ENCODE measurements at regions of chr2 and their contacts with region 1.

Region 1: DNA sequence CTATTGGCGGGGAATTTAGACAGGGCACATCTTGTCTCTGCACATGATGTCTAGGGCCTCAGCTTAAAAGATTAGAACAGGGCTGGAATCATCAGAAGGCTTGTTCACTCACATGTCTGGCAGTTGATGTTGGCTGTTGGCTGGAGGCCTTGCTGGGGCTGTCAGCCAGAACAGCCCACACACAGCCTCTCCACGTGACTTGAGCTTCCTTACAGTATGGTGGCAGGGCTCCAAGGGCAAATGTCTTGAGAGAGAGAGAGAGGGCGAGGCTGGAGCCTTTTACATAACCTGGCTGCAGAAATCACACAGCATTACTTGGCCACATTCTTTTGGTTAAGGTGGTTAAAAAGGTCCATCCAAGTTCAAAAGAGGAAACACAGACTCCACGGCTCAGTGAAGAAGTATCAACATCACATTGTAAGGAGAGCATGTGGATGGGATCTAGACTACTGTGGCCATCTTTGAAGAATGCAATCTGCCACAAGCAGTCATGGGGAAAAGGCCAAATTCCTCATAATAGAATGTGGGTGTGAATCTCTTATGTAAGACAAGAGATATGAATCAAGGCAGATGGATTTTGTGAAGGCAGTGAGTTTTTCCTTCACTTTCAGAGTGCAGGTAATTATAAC is 30.4 kb downstream of the SRSF7 start:
- DNase-seq: no peak
- H3K4me3 Mint-ChIP-seq: peak overlapping the region; percentile 40
- H3K27ac Mint-ChIP-seq: peak overlapping the region; percentile 87
- H3K4me1 Mint-ChIP-seq: peaks cover 59% of the 10 kb centered on the region
- H3K27me3 Mint-ChIP-seq: no peaks in the 10 kb centered on the region

Region 2: GRCh38 chr2:38581193-38582147 is 139.3 kb before region 1 on chr2:
- intact Hi-C with region 1: loop called (anchors 2 kb)
- DNase-seq: peak; percentile 9
- H3K4me3 Mint-ChIP-seq: no peak overlapping the region
- H3K27ac Mint-ChIP-seq: peak overlapping the region; percentile 75
- H3K4me1 Mint-ChIP-seq: peaks cover 28% of the 10 kb centered on the region
- H3K27me3 Mint-ChIP-seq: no peaks in the 10 kb centered on the region

Region 3: GRCh38 chr2:38622210-38622609 is 98.5 kb before region 1 on chr2:
- intact Hi-C with region 1: no loop called
- DNase-seq: no peak
- H3K4me3 Mint-ChIP-seq: no peak overlapping the region
- H3K27ac Mint-ChIP-seq: no peak overlapping the region
- H3K4me1 Mint-ChIP-seq: peaks cover 32% of the 10 kb centered on the region
- H3K27me3 Mint-ChIP-seq: peaks cover 2% of the 10 kb centered on the region

Region 4: DNA sequence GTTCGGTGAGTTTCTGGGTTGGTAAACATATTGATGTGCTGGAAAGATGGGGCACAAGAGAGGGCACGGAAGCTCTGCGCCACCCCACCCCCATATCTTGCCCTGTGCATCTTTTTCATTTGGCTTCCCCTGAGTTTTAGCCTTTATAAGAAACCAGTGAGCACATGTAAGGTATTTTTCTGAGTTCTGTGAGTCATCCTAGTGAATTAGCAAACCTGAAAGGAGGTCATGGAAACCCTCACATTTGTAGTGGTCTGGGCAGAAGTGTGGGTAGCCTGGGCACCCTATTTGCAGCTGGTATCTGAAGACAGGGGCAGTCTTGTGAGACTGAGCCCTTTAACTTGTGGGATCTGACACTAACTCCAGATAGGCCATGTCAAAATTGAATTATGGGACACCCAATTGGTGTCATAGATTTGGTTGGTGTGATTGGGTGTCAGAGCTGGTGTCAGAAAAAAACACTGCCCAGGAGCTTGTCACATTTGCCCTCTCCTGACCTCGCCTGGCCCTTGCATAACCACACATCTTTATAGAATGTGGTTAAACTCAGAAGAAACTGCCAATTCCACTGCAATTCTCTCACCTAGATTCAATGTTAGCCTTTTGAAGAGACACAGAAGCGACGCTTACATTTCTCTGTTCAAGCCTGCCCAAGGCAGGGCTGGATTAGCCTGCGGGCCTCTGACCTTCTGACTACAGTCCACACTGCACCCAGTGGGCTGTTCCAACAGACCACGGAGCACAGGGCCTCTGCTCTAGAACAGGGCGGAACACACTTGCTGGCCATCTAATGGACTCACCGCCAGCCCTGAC is 66.8 kb before region 1 on chr2:
- intact Hi-C with region 1: loop called (anchors 1 kb)
- DNase-seq: peak; percentile 30
- H3K4me3 Mint-ChIP-seq: peak overlapping the region; percentile 68
- H3K27ac Mint-ChIP-seq: peak overlapping the region; percentile 90
- H3K4me1 Mint-ChIP-seq: peaks cover 80% of the 10 kb centered on the region
- H3K27me3 Mint-ChIP-seq: no peaks in the 10 kb centered on the region

Region 5: DNA sequence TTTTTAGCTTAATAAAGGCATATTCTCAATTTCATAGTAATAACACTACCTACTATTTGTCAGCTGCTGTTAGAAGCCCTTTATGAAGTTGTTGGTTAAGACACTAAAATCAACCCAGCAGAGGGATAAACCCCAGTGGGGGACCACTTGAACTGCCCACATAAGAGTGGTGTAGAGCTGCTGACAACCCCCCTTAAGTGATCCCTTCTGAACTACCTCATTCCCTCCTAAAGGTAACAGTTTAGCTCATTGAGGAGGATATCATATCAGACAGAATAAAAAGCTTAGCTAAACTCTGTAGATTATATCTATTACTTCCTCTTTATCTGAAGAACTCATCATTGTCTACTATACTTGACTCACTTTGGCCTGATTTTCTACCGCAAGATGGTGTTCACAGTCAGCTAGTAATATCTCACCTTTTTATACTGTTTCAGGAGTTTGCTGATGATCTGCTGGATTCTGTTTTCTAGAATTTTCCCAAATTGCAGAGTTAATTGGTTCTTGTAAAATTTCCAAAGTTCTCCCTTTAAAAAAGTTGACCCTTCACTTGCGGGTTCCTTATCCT is 38.6 kb before region 1 on chr2:
- intact Hi-C with region 1: loop called (anchors 5 kb)
- DNase-seq: no peak
- H3K4me3 Mint-ChIP-seq: no peak overlapping the region
- H3K27ac Mint-ChIP-seq: peak overlapping the region; percentile 77
- H3K4me1 Mint-ChIP-seq: peaks cover 56% of the 10 kb centered on the region
- H3K27me3 Mint-ChIP-seq: no peaks in the 10 kb centered on the region

Region 6: DNA sequence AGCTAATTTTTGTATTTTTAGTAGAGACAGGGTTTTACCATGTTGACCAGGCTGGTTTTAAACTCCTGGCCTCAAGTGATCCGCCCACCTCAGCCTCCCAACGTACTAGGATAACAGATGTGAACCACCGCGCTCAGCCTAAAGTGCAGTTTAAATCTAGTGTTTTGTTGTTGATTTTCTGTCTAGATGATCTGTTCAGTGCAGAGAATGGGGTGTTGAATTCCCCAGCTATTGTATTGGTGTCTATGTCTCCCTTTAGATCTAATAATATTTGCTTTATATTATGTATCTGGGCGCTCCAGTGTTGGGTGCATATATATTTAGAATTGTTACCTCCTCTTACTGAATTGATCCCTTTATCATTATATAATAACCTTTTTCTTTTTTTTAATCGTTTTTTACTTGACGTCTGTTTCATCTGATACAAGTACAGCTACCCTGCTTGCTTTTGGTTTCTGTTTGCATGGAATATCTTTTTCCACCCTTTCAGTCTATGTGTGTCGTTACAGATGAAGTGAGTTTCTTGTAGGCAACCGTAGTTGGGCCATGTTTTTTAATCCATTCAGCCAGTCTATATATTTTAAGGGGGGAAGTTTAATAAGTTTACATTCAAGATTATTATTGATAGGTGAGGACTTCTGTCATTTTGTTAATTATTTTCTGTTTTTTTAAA is 20.5 kb before region 1 on chr2:
- intact Hi-C with region 1: loop called (anchors 1 kb)
- DNase-seq: no peak
- H3K4me3 Mint-ChIP-seq: peak overlapping the region; percentile 62
- H3K27ac Mint-ChIP-seq: peak overlapping the region; percentile 93
- H3K4me1 Mint-ChIP-seq: peaks cover 53% of the 10 kb centered on the region
- H3K27me3 Mint-ChIP-seq: no peaks in the 10 kb centered on the region

Region 7: DNA sequence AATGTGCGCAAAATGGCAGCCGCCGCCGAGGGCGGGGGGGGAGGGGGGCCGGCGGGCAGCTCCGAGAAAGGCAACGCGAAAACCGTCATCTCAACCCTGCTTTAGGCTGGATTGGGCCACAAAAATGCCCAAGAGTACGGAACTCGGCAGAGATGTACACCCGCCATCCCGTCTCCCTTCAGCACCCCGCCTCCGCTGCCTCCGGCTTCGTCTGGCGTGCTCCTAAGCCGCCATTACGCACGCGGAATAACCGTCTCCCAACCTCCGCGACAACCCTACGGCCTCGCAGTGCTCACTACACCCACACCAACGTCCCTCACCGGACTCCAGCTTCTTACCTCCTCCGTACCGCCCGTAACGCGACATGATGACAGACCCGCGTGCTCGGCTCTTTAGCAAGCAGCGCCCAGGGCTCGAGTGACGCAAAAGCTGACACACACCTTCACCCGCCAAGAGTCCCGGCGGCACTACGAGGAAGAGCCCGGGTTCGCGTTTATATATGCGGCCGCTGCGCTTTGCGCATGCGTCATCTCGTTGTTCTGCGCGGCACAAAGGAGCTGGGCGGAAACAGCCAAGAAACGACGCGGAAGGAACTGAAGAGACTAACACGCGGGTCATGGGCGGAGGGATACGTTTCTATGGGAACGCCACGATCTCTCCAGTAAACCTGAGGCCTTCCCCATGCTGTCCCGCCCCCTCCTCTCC is 30.3 kb after region 1 on chr2 and contains the start of gene SRSF7:
- intact Hi-C with region 1: loop called (anchors 1 kb)
- DNase-seq: peak; percentile 96
- H3K4me3 Mint-ChIP-seq: peak within 1 kb of the TSS; percentile 98
- H3K27ac Mint-ChIP-seq: peak within 1 kb of the TSS; percentile 100
- H3K4me1 Mint-ChIP-seq: peaks cover 54% of the 10 kb centered on the region
- H3K27me3 Mint-ChIP-seq: no peaks in the 10 kb centered on the region
- total RNA-seq, gene SRSF7: 417 and 422 TPM in 2 replicates

Measured in activated T-helper 1 cell treated with anti-CD3 and anti-CD28 coated beads, Interleukin-12 subunit alpha, Interleukin-12 subunit beta, Interleukin-2, Interleukin-4 antibody, amounts not matched to agents 30 ng/mL and 10 ng/mL and 1 ng/mL, durations not matched to agents 14 hours and 24 hours and 36 hours (primary cell).